ENCODE measurements at regions of chr6 and their contacts with region 1.

Region 1: DNA sequence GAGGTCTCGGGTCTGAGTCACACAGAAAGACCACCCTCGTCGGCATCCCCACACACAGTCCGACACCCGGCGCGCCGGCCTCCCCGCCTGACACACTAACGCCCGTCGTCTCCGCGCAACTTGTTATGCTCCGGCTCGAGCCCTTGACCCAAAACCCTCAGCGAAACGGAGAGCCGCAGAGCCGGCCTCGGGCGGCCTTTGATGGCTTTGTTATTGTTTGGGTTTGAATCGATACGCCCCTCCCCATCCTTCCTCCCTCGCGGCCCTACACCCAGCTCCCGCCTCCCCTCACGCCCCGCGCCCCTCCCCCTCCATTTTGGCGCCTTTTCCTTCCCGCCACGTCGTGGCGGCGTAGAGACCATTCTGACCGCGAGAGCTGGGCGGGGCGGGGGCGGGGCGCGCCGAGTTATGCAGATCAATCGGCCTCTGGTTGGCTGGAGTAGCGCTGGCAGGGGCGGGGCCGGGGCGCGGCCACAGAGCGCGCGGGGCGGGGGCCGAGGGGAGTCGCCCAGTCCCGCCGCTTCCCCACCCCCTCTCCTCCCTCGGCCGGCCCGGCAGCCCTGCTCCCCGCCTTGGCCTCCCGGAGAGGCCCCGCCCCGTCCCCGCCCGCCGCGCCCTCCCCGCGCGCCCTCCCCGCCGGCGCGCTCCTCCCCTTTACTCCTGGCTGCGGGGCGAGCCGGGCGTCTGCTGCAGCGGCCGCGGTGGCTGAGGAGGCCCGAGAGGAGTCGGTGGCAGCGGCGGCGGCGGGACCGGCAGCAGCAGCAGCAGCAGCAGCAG is at the start of gene PIM1:
- DNase-seq: peak; percentile 92 to 99 (median 98)
- H3K4me3 ChIP-seq: peak within 1 kb of the TSS; percentile 68
- H3K4me3 Mint-ChIP-seq: peak within 1 kb of the TSS; percentile 90 to 99 (median 94)
- H3K27ac ChIP-seq: peak within 1 kb of the TSS; percentile 89
- H3K27ac Mint-ChIP-seq: peak within 1 kb of the TSS; percentile 91 to 98 (median 96)
- H3K4me1 ChIP-seq: peaks cover 29% of the 10 kb centered on the region
- H3K4me1 Mint-ChIP-seq: peaks cover 40 to 42% (median 41%) of the 10 kb centered on the region in 3 donors
- H3K27me3 ChIP-seq: no peaks in the 10 kb centered on the region
- H3K27me3 Mint-ChIP-seq: peaks cover 0 to 3% of the 10 kb centered on the region in 2 donors
- total RNA-seq, gene PIM1: 93.7 to 99.1 TPM

Region 2: GRCh38 chr6:36885461-36886401 is 284.0 kb before region 1 on chr6 and contains the start of gene C6orf89:
- CTCF ChIA-PET with region 1: interaction called, 14 read pairs
- POLR2A ChIA-PET with region 1: interaction called, 7 read pairs
- DNase-seq: peak; percentile 95 to 99 (median 97)
- H3K4me3 ChIP-seq: peak within 1 kb of the TSS; percentile 72
- H3K4me3 Mint-ChIP-seq: peak within 1 kb of the TSS; percentile 79 to 96 (median 91)
- H3K27ac ChIP-seq: peak within 1 kb of the TSS; percentile 82
- H3K27ac Mint-ChIP-seq: peak within 1 kb of the TSS; percentile 84 to 97 (median 96)
- H3K4me1 ChIP-seq: peaks cover 34% of the 10 kb centered on the region
- H3K4me1 Mint-ChIP-seq: peaks cover 32 to 50% (median 50%) of the 10 kb centered on the region in 3 donors
- H3K27me3 ChIP-seq: no peaks in the 10 kb centered on the region
- H3K27me3 Mint-ChIP-seq: no peaks in the 10 kb centered on the region
- total RNA-seq, gene C6orf89: 37.4 to 40.0 TPM

Region 3: GRCh38 chr6:37051138-37052026 is 118.3 kb before region 1 on chr6:
- CTCF ChIA-PET with region 1: interaction called, 229 read pairs
- POLR2A ChIA-PET with region 1: interaction called, 38 read pairs
- DNase-seq: peak; percentile 80 to 90 (median 82)
- H3K4me3 ChIP-seq: peak overlapping the region; percentile 75
- H3K4me3 Mint-ChIP-seq: peak overlapping the region; percentile 64 to 95 (median 84)
- H3K27ac ChIP-seq: peak overlapping the region; percentile 91
- H3K27ac Mint-ChIP-seq: peak overlapping the region; percentile 80 to 100 (median 94)
- H3K4me1 ChIP-seq: peaks cover 60% of the 10 kb centered on the region
- H3K4me1 Mint-ChIP-seq: peaks cover 58 to 63% (median 61%) of the 10 kb centered on the region in 3 donors
- H3K27me3 ChIP-seq: no peaks in the 10 kb centered on the region
- H3K27me3 Mint-ChIP-seq: no peaks in the 10 kb centered on the region

Region 4: DNA sequence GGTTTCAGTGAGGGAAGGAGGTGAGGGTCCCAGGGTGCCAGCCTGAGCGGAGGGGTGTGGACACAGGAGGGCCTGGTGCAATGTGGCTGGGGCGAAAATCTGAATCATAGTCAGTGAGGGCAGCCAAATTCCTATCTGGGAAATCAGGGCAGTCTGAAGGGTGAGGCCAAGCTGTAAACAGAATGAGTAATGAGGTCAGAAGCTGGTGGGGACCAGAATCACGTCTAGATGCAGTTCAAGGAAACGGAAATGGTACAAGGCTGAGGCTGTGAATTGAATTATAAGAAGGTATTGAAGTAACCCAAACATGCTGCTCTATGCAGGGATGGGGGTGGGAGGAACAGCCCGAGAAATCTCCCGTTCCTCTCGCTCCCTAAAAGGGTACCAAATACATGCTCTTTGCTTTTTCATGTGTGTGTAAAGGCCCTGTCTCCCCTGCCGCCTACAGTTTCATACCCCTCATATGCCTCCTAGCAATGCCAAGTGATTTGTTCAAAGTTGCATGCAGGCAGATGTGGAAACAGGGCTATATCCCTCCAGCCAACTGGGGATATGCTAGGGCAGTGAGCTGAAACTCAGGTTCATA is 35.0 kb before region 1 on chr6:
- CTCF ChIA-PET with region 1: interaction called, 8 read pairs
- POLR2A ChIA-PET with region 1: interaction called, 21 read pairs
- DNase-seq: peak in 4 of 5 donors; percentile 27 to 61 (median 46)
- H3K4me3 ChIP-seq: no peak overlapping the region
- H3K4me3 Mint-ChIP-seq: peak overlapping the region; percentile 7 to 83 (median 74)
- H3K27ac ChIP-seq: peak overlapping the region; percentile 72
- H3K27ac Mint-ChIP-seq: peak overlapping the region; percentile 90 to 100 (median 98)
- H3K4me1 ChIP-seq: peaks cover 21% of the 10 kb centered on the region
- H3K4me1 Mint-ChIP-seq: peaks cover 40 to 54% (median 45%) of the 10 kb centered on the region in 3 donors
- H3K27me3 ChIP-seq: no peaks in the 10 kb centered on the region
- H3K27me3 Mint-ChIP-seq: no peaks in the 10 kb centered on the region

Region 5: DNA sequence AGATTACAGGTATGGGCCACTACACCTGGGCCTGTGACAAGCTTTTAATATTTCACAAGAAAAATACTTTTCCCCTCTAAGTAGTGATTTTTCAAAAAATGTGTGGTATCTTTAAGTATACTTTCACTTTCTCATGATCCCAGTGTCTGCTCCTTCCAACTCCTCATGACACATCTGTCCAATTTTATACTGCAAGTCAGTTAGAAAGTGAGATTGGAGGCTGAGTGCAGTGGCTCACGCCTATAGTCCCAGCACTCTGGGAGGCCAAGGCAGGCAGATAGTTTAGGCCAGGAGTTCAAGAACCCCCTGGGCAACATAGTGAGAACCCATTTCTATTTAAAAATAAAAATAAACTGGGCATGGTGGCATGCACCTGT is 20.5 kb after region 1 on chr6:
- CTCF ChIA-PET with region 1: interaction called, 21 read pairs
- POLR2A ChIA-PET with region 1: interaction called, 8 read pairs
- DNase-seq: no peak
- H3K4me3 ChIP-seq: no peak overlapping the region
- H3K4me3 Mint-ChIP-seq: peak overlapping the region in 1 of 7 donors; percentile 51
- H3K27ac ChIP-seq: peak overlapping the region; percentile 48
- H3K27ac Mint-ChIP-seq: peak overlapping the region in 3 of 8 donors; percentile 14 to 86 (median 51)
- H3K4me1 ChIP-seq: peaks cover 54% of the 10 kb centered on the region
- H3K4me1 Mint-ChIP-seq: peaks cover 48 to 66% (median 59%) of the 10 kb centered on the region in 3 donors
- H3K27me3 ChIP-seq: no peaks in the 10 kb centered on the region
- H3K27me3 Mint-ChIP-seq: no peaks in the 10 kb centered on the region

Region 6: GRCh38 chr6:37207903-37208456 is 38.3 kb after region 1 on chr6:
- CTCF ChIA-PET with region 1: interaction called, 216 read pairs
- POLR2A ChIA-PET with region 1: interaction called, 25 read pairs
- DNase-seq: peak; percentile 79 to 92 (median 80)
- H3K4me3 ChIP-seq: no peak overlapping the region
- H3K4me3 Mint-ChIP-seq: peak overlapping the region in 5 of 7 donors; percentile 20 to 90 (median 51)
- H3K27ac ChIP-seq: no peak overlapping the region
- H3K27ac Mint-ChIP-seq: peak overlapping the region in 7 of 8 donors; percentile 41 to 95 (median 76)
- H3K4me1 ChIP-seq: peaks cover 50% of the 10 kb centered on the region
- H3K4me1 Mint-ChIP-seq: peaks cover 49 to 60% (median 59%) of the 10 kb centered on the region in 3 donors
- H3K27me3 ChIP-seq: no peaks in the 10 kb centered on the region
- H3K27me3 Mint-ChIP-seq: no peaks in the 10 kb centered on the region

Measured in CD8-positive, alpha-beta memory T cell (primary cell).